Gastrocnemius medialis (tissue), 4 donors: ENCODE measurements at regions of chr3 and their contacts with region 1.

Region 1: DNA sequence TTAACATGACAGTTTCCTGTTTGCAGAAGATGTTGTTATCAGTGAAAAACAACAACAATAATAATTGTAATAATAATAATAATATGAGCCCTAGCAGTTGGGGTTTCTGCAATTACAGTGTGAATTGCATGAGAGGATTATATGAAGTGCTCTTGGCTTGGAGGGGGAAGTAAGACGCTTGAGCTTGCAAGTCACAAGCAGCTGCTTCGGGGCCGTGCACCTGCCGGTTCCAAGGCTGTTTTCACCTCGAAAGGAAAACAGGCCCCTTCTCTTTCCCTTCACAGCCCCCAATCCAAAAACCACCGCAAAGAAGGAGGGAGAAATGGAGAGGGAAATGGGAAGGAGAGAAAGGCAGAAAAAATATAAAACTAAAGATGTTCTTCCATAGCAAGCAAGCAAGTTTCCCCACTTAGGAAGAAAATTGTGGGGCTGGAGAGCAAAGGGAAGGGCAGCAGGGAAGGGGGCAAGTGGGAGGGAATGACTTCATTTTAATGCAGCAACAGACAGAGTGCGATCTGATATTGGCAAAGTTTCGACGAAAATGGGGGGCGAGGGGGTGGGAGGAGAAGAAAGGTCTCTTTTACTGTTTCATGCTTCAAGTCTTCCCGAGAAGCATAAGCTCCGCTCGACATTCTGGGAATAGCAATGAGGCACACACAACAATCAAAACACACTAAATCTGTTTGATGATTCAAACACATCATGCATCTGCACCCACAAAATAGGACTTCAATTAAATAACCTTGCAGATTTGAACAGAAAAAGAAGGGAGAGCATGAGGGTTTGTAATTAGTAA is 284.2 kb upstream of the ATP11B start:
- DNase-seq: no peak
- ATAC-seq: no peak
- H3K4me3 ChIP-seq: no peak overlapping the region
- H3K27ac ChIP-seq: no peak overlapping the region
- H3K4me1 ChIP-seq: no peaks in the 10 kb centered on the region
- H3K27me3 ChIP-seq: no peaks in the 10 kb centered on the region
- CTCF ChIP-seq: no peak
- POLR2A ChIP-seq: no peak

Region 2: GRCh38 chr3:182019657-182020335 is 489.3 kb before region 1 on chr3:
- in situ Hi-C with region 1: no loop called
- intact Hi-C with region 1: loop called (anchors 10 kb)
- DNase-seq: no peak
- ATAC-seq: no peak
- H3K4me3 ChIP-seq: no peak overlapping the region
- H3K27ac ChIP-seq: no peak overlapping the region
- H3K4me1 ChIP-seq: no peaks in the 10 kb centered on the region
- H3K27me3 ChIP-seq: no peaks in the 10 kb centered on the region
- CTCF ChIP-seq: no peak
- POLR2A ChIP-seq: no peak